ENCODE measurements at regions of chr6 and their contacts with region 1.

Region 1: GRCh38 chr6:119727504-119728217 is 378.1 kb upstream of the MAN1A1 start:
- DNase-seq: peak; percentile 86 to 99
- H3K4me3 ChIP-seq: peak overlapping the region; percentile 56
- H3K27ac ChIP-seq: peak overlapping the region; percentile 98
- H3K4me1 ChIP-seq: peaks cover 41% of the 10 kb centered on the region
- H3K27me3 ChIP-seq: no peaks in the 10 kb centered on the region
- CTCF ChIP-seq: peak; percentile 73

Region 2: GRCh38 chr6:119129148-119129967 is 598.3 kb before region 1 on chr6:
- CTCF ChIA-PET with region 1: no interaction called
- POLR2A ChIA-PET with region 1: interaction called, 24 read pairs
- intact Hi-C with region 1: loop called (anchors 2 kb)
- DNase-seq: peak; percentile 20 to 68
- H3K4me3 ChIP-seq: 0 out of 2 replicates have a peak overlapping the region, but pooled peaks have one; percentile 2
- H3K27ac ChIP-seq: peak overlapping the region; percentile 55
- H3K4me1 ChIP-seq: peaks cover 35% of the 10 kb centered on the region
- H3K27me3 ChIP-seq: no peaks in the 10 kb centered on the region
- CTCF ChIP-seq: peak; percentile 96

Region 3: DNA sequence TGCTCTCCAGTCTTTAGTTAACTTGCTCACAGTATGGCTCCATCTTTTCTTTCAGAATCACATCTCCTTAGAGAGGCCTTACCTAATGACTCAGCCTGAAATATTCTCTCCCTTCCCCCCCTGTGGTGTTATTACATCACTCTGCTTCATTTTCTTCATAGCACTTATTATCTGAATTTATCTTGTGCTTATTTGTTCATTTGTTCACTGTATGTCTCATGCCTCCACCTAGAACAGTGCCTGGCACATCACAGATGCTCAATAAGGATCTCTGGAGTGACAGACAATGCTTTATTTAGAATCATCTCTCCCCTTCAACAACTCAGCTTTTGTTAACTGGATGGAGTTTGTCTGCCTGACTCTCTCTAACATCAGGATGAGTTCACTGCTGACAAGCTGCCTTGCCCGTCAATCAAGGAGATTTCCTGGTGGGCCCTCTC is 281.5 kb before region 1 on chr6:
- CTCF ChIA-PET with region 1: no interaction called
- POLR2A ChIA-PET with region 1: no interaction called
- intact Hi-C with region 1: loop called (anchors 2 kb)
- DNase-seq: peak; percentile 9 to 72
- H3K4me3 ChIP-seq: peak overlapping the region; percentile 30; the same call in 1 of the 2 replicates
- H3K27ac ChIP-seq: peak overlapping the region; percentile 96
- H3K4me1 ChIP-seq: peaks cover 46% of the 10 kb centered on the region
- H3K27me3 ChIP-seq: no peaks in the 10 kb centered on the region
- CTCF ChIP-seq: no peak

Region 4: DNA sequence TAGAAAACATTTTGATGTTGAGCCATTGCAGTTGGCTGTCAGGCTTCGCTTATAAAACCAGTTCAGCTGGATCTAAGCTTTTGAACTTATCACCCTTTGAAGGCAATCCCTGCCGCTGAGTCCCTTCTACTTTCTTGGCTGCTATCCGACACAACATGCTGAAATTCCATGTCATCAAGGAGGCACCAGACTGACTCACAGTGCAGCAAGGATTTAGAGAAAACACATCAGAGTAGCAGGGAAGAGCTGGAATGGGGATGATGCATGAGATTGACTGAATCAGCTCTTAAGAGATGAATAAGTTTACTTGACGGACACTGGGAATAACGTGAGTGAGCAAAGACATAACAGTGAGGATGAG is 243.0 kb before region 1 on chr6:
- CTCF ChIA-PET with region 1: no interaction called
- POLR2A ChIA-PET with region 1: no interaction called
- intact Hi-C with region 1: loop called (anchors 1 kb)
- DNase-seq: peak; percentile 72 to 99
- H3K4me3 ChIP-seq: no peak overlapping the region
- H3K27ac ChIP-seq: peak overlapping the region; percentile 75
- H3K4me1 ChIP-seq: peaks cover 29% of the 10 kb centered on the region
- H3K27me3 ChIP-seq: no peaks in the 10 kb centered on the region
- CTCF ChIP-seq: no peak

Region 5: GRCh38 chr6:119541132-119541905 is 186.3 kb before region 1 on chr6:
- CTCF ChIA-PET with region 1: no interaction called
- POLR2A ChIA-PET with region 1: no interaction called
- intact Hi-C with region 1: loop called (anchors 5 kb)
- DNase-seq: peak in 1 of 2 experiments; percentile 75
- H3K4me3 ChIP-seq: no peak overlapping the region
- H3K27ac ChIP-seq: peak overlapping the region; percentile 35
- H3K4me1 ChIP-seq: peaks cover 15% of the 10 kb centered on the region
- H3K27me3 ChIP-seq: no peaks in the 10 kb centered on the region
- CTCF ChIP-seq: no peak

Region 6: GRCh38 chr6:119620846-119621555 is 106.7 kb before region 1 on chr6:
- CTCF ChIA-PET with region 1: no interaction called
- POLR2A ChIA-PET with region 1: no interaction called
- intact Hi-C with region 1: loop called (anchors 2 kb)
- DNase-seq: peak; percentile 37 to 79
- H3K4me3 ChIP-seq: peak overlapping the region; percentile 15; the same call in 1 of the 2 replicates
- H3K27ac ChIP-seq: peak overlapping the region; percentile 78
- H3K4me1 ChIP-seq: peaks cover 23% of the 10 kb centered on the region
- H3K27me3 ChIP-seq: no peaks in the 10 kb centered on the region
- CTCF ChIP-seq: no peak

Region 7: GRCh38 chr6:119830494-119831295 is 103.0 kb after region 1 on chr6:
- CTCF ChIA-PET with region 1: no interaction called
- POLR2A ChIA-PET with region 1: no interaction called
- intact Hi-C with region 1: loop called (anchors 1 kb)
- DNase-seq: peak; percentile 70 to 77
- H3K4me3 ChIP-seq: no peak overlapping the region
- H3K27ac ChIP-seq: peak overlapping the region; percentile 71
- H3K4me1 ChIP-seq: peaks cover 55% of the 10 kb centered on the region
- H3K27me3 ChIP-seq: no peaks in the 10 kb centered on the region
- CTCF ChIP-seq: no peak

Measured in PC-9 (cell line).